Right ventricle myocardium inferior (tissue), 1 donor: ENCODE measurements at regions of chr15 and their contacts with region 1.

Region 1: GRCh38 chr15:45307230-45307924 is 55.3 kb downstream of the SLC28A2 start:
- DNase-seq: no peak
- ATAC-seq: no peak

Region 2: DNA sequence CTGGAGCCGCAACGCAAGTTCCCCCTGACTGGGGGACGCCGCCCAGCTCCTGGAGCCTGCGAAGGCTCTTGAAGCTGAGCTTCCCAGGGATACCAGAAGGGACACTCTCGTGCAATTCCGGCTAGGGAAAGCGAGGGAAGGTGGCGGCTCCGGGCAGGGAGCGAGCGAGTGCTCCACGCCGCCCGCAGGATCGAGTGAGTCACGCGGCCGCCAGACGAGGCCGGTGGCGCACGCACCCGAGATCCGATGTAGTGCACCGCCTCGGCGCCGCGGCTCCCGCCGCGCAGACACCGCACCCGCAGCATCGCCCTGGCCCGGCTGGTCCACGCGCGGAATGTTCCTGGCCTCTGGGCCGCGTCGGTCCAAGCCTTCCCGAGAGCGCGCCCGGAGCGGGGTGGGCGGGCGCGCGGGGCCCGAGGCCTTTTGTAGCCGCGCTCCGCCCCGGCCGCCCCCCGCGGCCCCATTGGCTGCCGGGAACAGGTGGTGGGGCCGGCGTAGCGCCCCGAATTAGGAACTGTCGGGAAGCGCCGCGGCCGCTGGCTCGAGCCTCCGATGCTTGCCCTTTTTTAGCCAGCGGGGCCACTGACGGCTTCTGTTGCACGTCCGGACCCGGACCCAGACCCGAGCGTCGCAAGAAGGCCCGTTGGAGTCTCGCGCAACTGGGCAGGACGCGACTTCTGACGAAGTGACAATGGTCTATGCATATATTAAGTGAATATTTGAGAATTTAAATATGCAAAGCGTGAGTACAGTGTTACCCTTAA is 71.0 kb after region 1 on chr15 and contains the start of gene GATM:
- intact Hi-C with region 1: loop called (anchors 5 kb)
- DNase-seq: peak; percentile 90
- ATAC-seq: peak; percentile 96
- total RNA-seq, gene GATM: 42.0 TPM